ENCODE measurements at regions of chr14 and their contacts with region 1.

Region 1: GRCh38 chr14:49867831-49868723 is 15.5 kb upstream of the NEMF start:
- DNase-seq: peak; percentile 98
- ATAC-seq: peak; percentile 87
- H3K4me3 ChIP-seq: peak overlapping the region; percentile 47 to 72 (median 62)
- H3K4me3 Mint-ChIP-seq: peak overlapping the region; percentile 91
- H3K27ac ChIP-seq: peak overlapping the region; percentile 89 to 96
- H3K27ac Mint-ChIP-seq: peak overlapping the region; percentile 99
- H3K4me1 ChIP-seq: peaks cover 60 to 66% of the 10 kb centered on the region in 2 donors
- H3K4me1 Mint-ChIP-seq: peaks cover 39% of the 10 kb centered on the region
- H3K27me3 ChIP-seq: no peaks in the 10 kb centered on the region
- H3K27me3 Mint-ChIP-seq: no peaks in the 10 kb centered on the region
- CTCF ChIP-seq: no peak

Region 2: DNA sequence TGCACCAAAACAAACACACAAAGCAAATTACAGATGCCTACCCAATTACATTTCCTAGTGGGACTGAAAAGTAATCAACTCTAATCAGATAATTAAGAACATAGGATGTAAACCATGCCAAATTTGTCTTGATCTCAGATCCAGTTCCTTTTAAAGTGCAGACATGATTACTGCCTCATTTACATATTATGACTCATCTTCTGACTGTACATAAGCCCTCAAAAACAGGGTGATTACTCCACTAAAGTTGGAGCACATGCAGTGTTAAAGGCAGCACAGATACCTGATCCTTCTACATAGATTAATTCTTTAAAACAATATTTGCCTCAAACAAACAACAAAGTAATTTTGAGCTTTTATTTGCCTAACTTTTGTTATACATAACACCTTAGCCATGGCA is 619.1 kb before region 1 on chr14:
- CTCF ChIA-PET with region 1: no interaction called
- POLR2A ChIA-PET with region 1: no interaction called
- intact Hi-C with region 1: no loop called
- DNase-seq: no peak
- ATAC-seq: no peak
- H3K4me3 ChIP-seq: no peak overlapping the region
- H3K4me3 Mint-ChIP-seq: no peak overlapping the region
- H3K27ac ChIP-seq: no peak overlapping the region
- H3K27ac Mint-ChIP-seq: no peak overlapping the region
- H3K4me1 ChIP-seq: no peaks in the 10 kb centered on the region
- H3K4me1 Mint-ChIP-seq: no peaks in the 10 kb centered on the region
- H3K27me3 ChIP-seq: no peaks in the 10 kb centered on the region
- H3K27me3 Mint-ChIP-seq: peaks cover 6% of the 10 kb centered on the region
- CTCF ChIP-seq: no peak

Region 3: GRCh38 chr14:49786315-49787110 is 81.6 kb before region 1 on chr14:
- CTCF ChIA-PET with region 1: no interaction called
- POLR2A ChIA-PET with region 1: no interaction called
- intact Hi-C with region 1: no loop called
- DNase-seq: no peak
- ATAC-seq: no peak
- H3K4me3 ChIP-seq: no peak overlapping the region
- H3K4me3 Mint-ChIP-seq: no peak overlapping the region
- H3K27ac ChIP-seq: peak overlapping the region in 1 of 2 donors; percentile 43
- H3K27ac Mint-ChIP-seq: no peak overlapping the region
- H3K4me1 ChIP-seq: no peaks in the 10 kb centered on the region
- H3K4me1 Mint-ChIP-seq: peaks cover 2% of the 10 kb centered on the region
- H3K27me3 ChIP-seq: no peaks in the 10 kb centered on the region
- H3K27me3 Mint-ChIP-seq: no peaks in the 10 kb centered on the region
- CTCF ChIP-seq: no peak

Region 4: GRCh38 chr14:49879683-49880204 is 11.7 kb after region 1 on chr14:
- CTCF ChIA-PET with region 1: interaction called, 49 read pairs
- POLR2A ChIA-PET with region 1: interaction called, 6 read pairs
- intact Hi-C with region 1: no loop called
- DNase-seq: peak; percentile 69
- ATAC-seq: peak; percentile 85
- H3K4me3 ChIP-seq: no peak overlapping the region
- H3K4me3 Mint-ChIP-seq: no peak overlapping the region
- H3K27ac ChIP-seq: peak overlapping the region in 1 of 2 donors; percentile 59
- H3K27ac Mint-ChIP-seq: peak overlapping the region; percentile 72
- H3K4me1 ChIP-seq: peaks cover 12 to 16% of the 10 kb centered on the region in 2 donors
- H3K4me1 Mint-ChIP-seq: peaks cover 15% of the 10 kb centered on the region
- H3K27me3 ChIP-seq: no peaks in the 10 kb centered on the region
- H3K27me3 Mint-ChIP-seq: no peaks in the 10 kb centered on the region
- CTCF ChIP-seq: peak; percentile 58

Region 5: DNA sequence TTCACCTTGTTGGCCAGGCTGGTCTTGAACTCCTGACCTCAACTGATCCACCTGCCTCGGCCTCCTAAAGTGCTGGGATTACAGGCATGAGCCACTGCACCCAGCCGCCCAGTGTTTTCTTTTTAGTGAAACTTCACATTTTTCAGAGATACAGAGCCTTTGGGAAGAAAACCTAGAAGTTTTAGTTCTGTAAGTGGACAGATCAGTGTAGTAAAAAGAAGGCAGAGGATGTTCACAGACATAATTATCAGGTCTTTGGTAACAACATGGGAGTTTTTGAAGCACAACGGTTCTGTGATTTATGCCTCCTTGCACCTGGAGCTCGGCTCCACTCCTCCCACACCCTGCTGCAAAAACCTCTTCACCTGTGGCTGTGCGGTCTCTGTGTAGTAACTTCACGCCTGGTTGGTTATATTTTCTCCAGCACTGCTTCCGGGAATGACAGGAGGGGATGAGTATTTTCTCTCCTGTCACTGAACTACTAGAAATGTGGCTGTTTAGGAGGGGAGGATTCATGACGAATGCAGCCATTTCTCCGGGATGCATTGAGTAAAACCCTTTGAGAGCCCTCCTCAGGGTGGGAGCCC is 91.8 kb after region 1 on chr14:
- CTCF ChIA-PET with region 1: interaction called, 6 read pairs
- POLR2A ChIA-PET with region 1: interaction called, 8 read pairs
- intact Hi-C with region 1: loop called (anchors 2 kb)
- DNase-seq: peak; percentile 77
- ATAC-seq: peak; percentile 68
- H3K4me3 ChIP-seq: peak overlapping the region in 4 of 5 experiments; percentile 0 to 48 (median 24)
- H3K4me3 Mint-ChIP-seq: peak overlapping the region; percentile 78
- H3K27ac ChIP-seq: peak overlapping the region; percentile 74 to 75
- H3K27ac Mint-ChIP-seq: peak overlapping the region; percentile 86
- H3K4me1 ChIP-seq: peaks cover 60 to 65% of the 10 kb centered on the region in 2 donors
- H3K4me1 Mint-ChIP-seq: peaks cover 70% of the 10 kb centered on the region
- H3K27me3 ChIP-seq: no peaks in the 10 kb centered on the region
- H3K27me3 Mint-ChIP-seq: no peaks in the 10 kb centered on the region
- CTCF ChIP-seq: no peak

Region 6: DNA sequence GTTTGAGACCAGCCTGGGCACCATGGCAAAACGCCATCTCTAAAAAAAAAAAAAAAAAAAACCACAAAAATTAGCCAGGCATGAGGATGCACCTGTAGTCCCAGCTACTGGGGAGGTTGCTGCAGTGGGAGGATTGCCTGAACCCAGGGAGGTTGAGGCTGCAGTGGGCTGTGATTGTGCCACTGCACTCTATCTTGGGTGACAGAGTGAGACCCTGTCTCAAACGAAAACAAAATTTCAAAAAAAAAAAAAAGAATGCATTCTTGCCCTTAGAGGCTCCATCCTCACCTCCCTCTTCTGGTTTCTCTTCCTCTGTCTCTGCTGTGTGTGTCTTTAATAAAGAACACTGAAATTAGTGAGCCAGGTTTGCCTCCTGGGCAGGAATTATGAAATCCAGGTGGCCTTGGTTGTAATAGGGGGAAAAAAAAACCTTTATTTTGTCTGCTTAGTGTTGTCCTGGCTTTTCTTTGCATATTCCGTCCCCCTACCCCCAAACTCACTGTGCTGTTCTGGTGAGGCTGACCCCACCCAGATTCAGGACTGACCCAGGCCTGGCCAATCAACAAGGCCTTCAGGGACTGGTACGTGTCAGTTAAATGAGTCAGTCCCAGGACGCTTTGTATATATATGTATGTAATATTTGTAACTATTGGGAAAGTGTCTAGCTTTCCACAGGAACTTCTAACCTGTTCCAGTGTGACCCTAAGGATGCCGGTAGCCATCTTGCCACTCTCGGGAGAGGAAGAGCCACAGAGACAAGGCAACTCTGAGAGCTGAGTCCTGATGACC is 140.7 kb after region 1 on chr14:
- CTCF ChIA-PET with region 1: interaction called, 114 read pairs
- POLR2A ChIA-PET with region 1: interaction called, 16 read pairs
- intact Hi-C with region 1: loop called (anchors 1 kb)
- DNase-seq: peak; percentile 66
- ATAC-seq: peak; percentile 74
- H3K4me3 ChIP-seq: peak overlapping the region in 2 of 5 experiments; percentile 21 to 23
- H3K4me3 Mint-ChIP-seq: peak overlapping the region; percentile 53
- H3K27ac ChIP-seq: peak overlapping the region; percentile 35 to 80
- H3K27ac Mint-ChIP-seq: peak overlapping the region; percentile 83
- H3K4me1 ChIP-seq: peaks cover 40 to 49% of the 10 kb centered on the region in 2 donors
- H3K4me1 Mint-ChIP-seq: peaks cover 63% of the 10 kb centered on the region
- H3K27me3 ChIP-seq: no peaks in the 10 kb centered on the region
- H3K27me3 Mint-ChIP-seq: no peaks in the 10 kb centered on the region
- CTCF ChIP-seq: no peak

Region 7: DNA sequence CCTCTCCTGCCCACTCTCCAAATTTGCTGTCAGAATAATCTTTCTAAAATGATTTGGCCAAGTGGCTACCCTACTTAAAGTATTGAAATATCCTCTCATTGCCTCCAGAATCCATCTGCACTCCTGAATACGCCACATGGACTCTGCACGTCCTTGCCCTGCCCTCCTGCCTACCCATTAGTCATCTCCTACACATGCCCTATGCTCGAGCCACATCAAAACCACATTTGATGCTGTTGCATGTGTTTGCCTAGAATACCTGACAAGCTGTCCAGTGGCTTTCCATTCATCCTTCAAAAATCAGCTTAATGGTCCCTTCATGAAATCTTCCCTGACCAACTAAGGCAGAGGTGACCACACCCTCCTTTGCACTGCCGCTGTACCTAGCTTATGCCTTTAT is 231.3 kb after region 1 on chr14:
- CTCF ChIA-PET with region 1: interaction called, 182 read pairs
- POLR2A ChIA-PET with region 1: interaction called, 13 read pairs
- intact Hi-C with region 1: no loop called
- DNase-seq: no peak
- ATAC-seq: no peak
- H3K4me3 ChIP-seq: no peak overlapping the region
- H3K4me3 Mint-ChIP-seq: no peak overlapping the region
- H3K27ac ChIP-seq: no peak overlapping the region
- H3K27ac Mint-ChIP-seq: peak overlapping the region; percentile 28
- H3K4me1 ChIP-seq: peaks cover 42 to 63% of the 10 kb centered on the region in 2 donors
- H3K4me1 Mint-ChIP-seq: peaks cover 66% of the 10 kb centered on the region
- H3K27me3 ChIP-seq: no peaks in the 10 kb centered on the region
- H3K27me3 Mint-ChIP-seq: no peaks in the 10 kb centered on the region
- CTCF ChIP-seq: no peak

Region 8: GRCh38 chr14:50823051-50823761 is 955.1 kb after region 1 on chr14:
- CTCF ChIA-PET with region 1: no interaction called
- POLR2A ChIA-PET with region 1: no interaction called
- intact Hi-C with region 1: loop called (anchors 10 kb)
- DNase-seq: peak; percentile 52
- ATAC-seq: peak; percentile 41
- H3K4me3 ChIP-seq: peak overlapping the region; percentile 23 to 60 (median 42)
- H3K4me3 Mint-ChIP-seq: peak overlapping the region; percentile 85
- H3K27ac ChIP-seq: peak overlapping the region; percentile 71 to 92
- H3K27ac Mint-ChIP-seq: peak overlapping the region; percentile 92
- H3K4me1 ChIP-seq: peaks cover 78 to 86% of the 10 kb centered on the region in 2 donors
- H3K4me1 Mint-ChIP-seq: peaks cover 91% of the 10 kb centered on the region
- H3K27me3 ChIP-seq: no peaks in the 10 kb centered on the region
- H3K27me3 Mint-ChIP-seq: no peaks in the 10 kb centered on the region
- CTCF ChIP-seq: no peak